IMR-90 (cell line): ENCODE measurements at regions of chr1 and their contacts with region 1.

Region 1: DNA sequence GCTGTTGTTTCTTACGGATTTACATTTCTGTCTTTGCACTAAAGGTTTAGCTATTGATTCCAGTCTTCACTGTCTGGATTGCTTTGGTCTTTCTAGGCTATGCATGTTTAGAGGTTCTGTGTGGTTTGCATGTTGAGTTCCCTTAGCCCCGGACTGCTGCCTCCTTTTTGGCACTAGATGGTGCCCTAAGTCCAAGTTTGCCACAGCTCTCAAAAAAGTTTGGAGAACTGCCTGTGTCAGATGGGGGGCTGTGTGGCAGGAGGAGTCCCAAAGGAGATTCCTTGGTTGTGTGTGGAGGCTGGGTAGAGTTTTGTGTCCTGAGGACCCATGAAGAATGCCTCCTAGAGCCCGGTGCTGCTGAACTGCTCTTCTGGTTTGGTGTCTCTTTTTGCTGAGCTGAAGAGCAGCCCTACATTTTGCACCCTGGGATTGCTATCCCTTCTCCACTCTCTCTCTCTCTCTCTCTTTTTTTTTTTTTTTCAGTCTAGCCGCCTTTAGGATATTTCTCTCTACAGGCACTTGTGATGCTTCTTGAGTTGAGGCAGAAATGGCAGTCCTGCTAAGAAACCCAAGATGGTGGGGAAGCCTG is 74.4 kb downstream of the PTGS2 start:
- DNase-seq: peak; percentile 59
- ATAC-seq: peak; percentile 88
- H3K4me3 ChIP-seq: no peak overlapping the region
- H3K27ac ChIP-seq: no peak overlapping the region
- H3K4me1 ChIP-seq: no peaks in the 10 kb centered on the region
- H3K27me3 ChIP-seq: no peaks in the 10 kb centered on the region
- CTCF ChIP-seq: peak; percentile 68
- POLR2A ChIP-seq: no peak
- RAD21 ChIP-seq: peak; percentile 81

Region 2: GRCh38 chr1:186404454-186405051 is 201.3 kb before region 1 on chr1:
- CTCF ChIA-PET with region 1: no interaction called
- POLR2A ChIA-PET with region 1: no interaction called
- dilution Hi-C with region 1: no loop called
- in situ Hi-C with region 1: no loop called
- intact Hi-C with region 1: loop called (anchors 2 kb)
- DNase-seq: peak; percentile 76
- ATAC-seq: peak; percentile 92
- H3K4me3 ChIP-seq: no peak overlapping the region
- H3K27ac ChIP-seq: no peak overlapping the region
- H3K4me1 ChIP-seq: no peaks in the 10 kb centered on the region; the same call in 1 of the 2 replicates
- H3K27me3 ChIP-seq: no peaks in the 10 kb centered on the region
- CTCF ChIP-seq: peak; percentile 80
- POLR2A ChIP-seq: no peak
- RAD21 ChIP-seq: peak; percentile 72

Region 3: DNA sequence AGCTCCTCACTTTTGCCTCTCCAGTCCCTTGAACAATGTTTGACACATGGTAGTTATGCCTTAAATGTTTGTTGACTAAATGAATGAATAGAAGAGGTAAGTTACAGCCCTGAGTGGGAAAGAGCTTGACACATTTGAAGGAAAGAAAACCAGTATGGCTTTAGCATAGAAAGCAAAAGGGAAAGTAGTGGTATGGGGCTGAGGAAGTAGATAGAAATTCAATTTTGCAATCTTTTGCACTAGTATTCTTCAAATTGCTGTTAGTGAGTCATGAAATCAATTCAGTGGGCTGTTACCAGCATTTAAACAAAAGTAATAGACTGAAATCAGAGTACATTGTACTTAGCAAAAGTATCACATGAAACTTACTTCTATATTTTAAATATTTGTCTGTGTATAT is 244.0 kb after region 1 on chr1:
- CTCF ChIA-PET with region 1: no interaction called
- POLR2A ChIA-PET with region 1: no interaction called
- dilution Hi-C with region 1: no loop called
- in situ Hi-C with region 1: no loop called
- intact Hi-C with region 1: no loop called
- DNase-seq: peak; percentile 32
- ATAC-seq: peak; percentile 42
- H3K4me3 ChIP-seq: no peak overlapping the region
- H3K27ac ChIP-seq: no peak overlapping the region
- H3K4me1 ChIP-seq: no peaks in the 10 kb centered on the region
- H3K27me3 ChIP-seq: no peaks in the 10 kb centered on the region
- CTCF ChIP-seq: no peak
- POLR2A ChIP-seq: no peak
- RAD21 ChIP-seq: no peak

Region 4: GRCh38 chr1:186915555-186915954 is 309.7 kb after region 1 on chr1:
- CTCF ChIA-PET with region 1: interaction called, 3 read pairs
- POLR2A ChIA-PET with region 1: no interaction called
- dilution Hi-C with region 1: no loop called
- in situ Hi-C with region 1: no loop called
- intact Hi-C with region 1: loop called (anchors 2 kb)
- DNase-seq: no peak
- ATAC-seq: no peak
- H3K4me3 ChIP-seq: no peak overlapping the region
- H3K27ac ChIP-seq: no peak overlapping the region
- H3K4me1 ChIP-seq: no peaks in the 10 kb centered on the region
- H3K27me3 ChIP-seq: no peaks in the 10 kb centered on the region
- CTCF ChIP-seq: 0 out of 2 replicates have a peak, but pooled peaks have one; percentile 18
- POLR2A ChIP-seq: no peak
- RAD21 ChIP-seq: peak; percentile 22; the same call in 1 of the 2 replicates